Activated naive CD4-positive, alpha-beta T cell treated with anti-CD3 and anti-CD28 coated beads, Interleukin-2, amount 10 ng/mL, durations not matched to agents 7 days and 5 days (primary cell): ENCODE measurements at regions of chr1 and their contacts with region 1.

Region 1: DNA sequence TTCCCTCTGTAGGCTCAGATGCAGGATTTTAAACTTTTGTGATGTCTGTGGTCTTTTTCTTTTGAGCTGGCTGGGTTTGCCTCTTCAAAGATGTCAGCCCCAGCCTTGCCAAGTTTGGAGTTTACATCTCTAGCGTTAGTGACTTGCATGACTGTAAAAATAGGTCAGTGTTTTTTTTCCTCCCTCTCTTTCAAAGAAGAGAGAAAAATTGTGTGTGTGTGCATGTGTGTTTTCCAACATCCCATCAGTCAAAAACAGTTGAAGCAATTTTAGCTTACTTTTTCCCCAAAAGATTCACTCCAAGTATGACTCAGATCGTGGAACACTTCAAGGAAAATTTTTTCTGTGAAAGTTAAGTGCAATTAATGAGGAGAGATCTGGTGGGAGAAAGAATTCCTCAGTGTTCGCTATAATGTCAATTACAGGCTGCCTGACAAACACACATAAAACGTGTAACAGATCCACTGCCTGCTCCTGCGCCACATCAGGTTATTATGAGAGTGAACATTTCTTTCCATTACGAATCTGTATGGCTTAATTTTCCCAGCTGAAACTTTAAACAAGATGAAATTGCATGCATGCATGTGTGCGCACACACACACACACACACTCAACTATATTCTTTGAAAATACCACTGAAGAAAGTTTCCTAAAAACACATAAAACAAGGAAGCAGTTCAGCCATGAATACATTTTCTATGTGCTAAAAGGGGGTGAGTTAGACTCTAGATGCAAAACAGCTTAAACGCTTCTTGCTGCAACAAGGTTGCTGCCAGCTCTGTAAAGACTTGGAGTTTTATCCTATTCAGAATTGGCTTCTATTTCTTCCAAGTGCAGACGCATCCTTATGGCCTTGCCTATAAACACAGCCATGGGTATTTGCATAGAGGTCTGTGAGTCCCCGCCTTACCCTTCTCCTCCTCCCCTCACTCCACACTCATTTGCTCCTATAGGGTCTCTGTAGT is 55.5 kb downstream of the TLR5 start:
- DNase-seq: no peak
- H3K4me3 Mint-ChIP-seq: no peak overlapping the region
- H3K27ac Mint-ChIP-seq: no peak overlapping the region
- H3K4me1 Mint-ChIP-seq: peaks cover 6% of the 10 kb centered on the region
- H3K27me3 Mint-ChIP-seq: peaks cover 6% of the 10 kb centered on the region

Region 2: DNA sequence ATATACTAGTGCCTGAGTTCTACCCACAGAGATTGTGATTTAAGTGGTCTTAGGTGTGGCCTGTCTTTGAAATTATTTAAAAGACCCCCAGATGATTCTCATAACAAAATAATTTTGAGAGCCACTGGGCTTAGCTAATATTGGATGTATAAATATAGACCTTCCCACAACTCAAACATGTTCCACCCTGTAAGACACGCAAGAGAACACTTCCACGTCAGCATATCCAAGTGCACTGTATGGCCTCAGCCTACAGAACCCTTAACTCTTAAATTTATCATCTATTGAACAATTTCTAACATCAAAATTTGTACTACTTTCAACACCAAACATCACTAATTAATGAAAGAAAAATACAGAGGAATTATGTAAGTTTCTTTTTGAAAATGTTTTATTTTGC is 348.1 kb before region 1 on chr1:
- CTCF ChIA-PET with region 1: interaction called, 12 read pairs
- DNase-seq: no peak
- H3K4me3 Mint-ChIP-seq: no peak overlapping the region
- H3K27ac Mint-ChIP-seq: no peak overlapping the region
- H3K4me1 Mint-ChIP-seq: no peaks in the 10 kb centered on the region
- H3K27me3 Mint-ChIP-seq: no peaks in the 10 kb centered on the region

Region 3: GRCh38 chr1:222792744-222793143 is 294.8 kb before region 1 on chr1:
- CTCF ChIA-PET with region 1: interaction called, 30 read pairs
- DNase-seq: no peak
- H3K4me3 Mint-ChIP-seq: no peak overlapping the region
- H3K27ac Mint-ChIP-seq: no peak overlapping the region
- H3K4me1 Mint-ChIP-seq: peaks cover 14% of the 10 kb centered on the region
- H3K27me3 Mint-ChIP-seq: peaks cover 7% of the 10 kb centered on the region

Region 4: GRCh38 chr1:223031733-223032601 is 55.6 kb before region 1 on chr1:
- CTCF ChIA-PET with region 1: no interaction called
- DNase-seq: no peak
- H3K4me3 Mint-ChIP-seq: no peak overlapping the region
- H3K27ac Mint-ChIP-seq: no peak overlapping the region
- H3K4me1 Mint-ChIP-seq: no peaks in the 10 kb centered on the region
- H3K27me3 Mint-ChIP-seq: no peaks in the 10 kb centered on the region

Region 5: DNA sequence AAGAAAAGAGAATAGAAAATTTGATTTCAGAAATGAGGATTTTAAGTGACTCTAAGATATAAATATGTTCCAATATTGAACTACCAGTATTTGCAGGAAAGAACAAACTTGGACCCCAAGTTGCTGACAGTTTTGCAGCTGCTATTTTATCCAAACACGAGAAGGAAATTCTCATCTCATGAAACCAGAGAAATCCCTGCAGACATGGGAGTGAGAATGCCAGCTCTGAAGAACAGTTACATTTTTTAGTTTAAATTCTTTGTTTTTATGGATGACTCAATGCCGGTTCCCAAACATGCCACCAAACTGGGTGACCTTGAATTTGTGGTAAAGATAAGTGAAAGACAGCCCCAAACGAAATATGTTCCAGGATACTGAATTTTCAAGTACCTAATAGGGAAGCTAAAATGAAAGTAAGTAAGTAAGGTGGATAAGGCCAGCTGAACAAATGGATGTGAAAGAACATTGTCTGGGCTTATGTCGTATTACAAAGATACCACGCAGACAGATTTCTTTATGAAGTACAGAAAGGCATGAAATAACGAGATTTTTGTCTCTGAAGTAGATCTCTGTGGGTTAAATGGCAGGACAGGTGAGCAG is 35.5 kb after region 1 on chr1:
- CTCF ChIA-PET with region 1: interaction called, 22 read pairs
- DNase-seq: no peak
- H3K4me3 Mint-ChIP-seq: peak overlapping the region; percentile 29
- H3K27ac Mint-ChIP-seq: no peak overlapping the region
- H3K4me1 Mint-ChIP-seq: peaks cover 8% of the 10 kb centered on the region
- H3K27me3 Mint-ChIP-seq: peaks cover 8% of the 10 kb centered on the region